OCI-LY7 (cell line): ENCODE measurements at regions of chr2 and their contacts with region 1.

Region 1: GRCh38 chr2:238288650-238289573 is 502 bp upstream of the PER2 start:
- DNase-seq: peak; percentile 100
- H3K4me3 ChIP-seq: peak overlapping the region; percentile 76
- H3K27ac ChIP-seq: peak overlapping the region; percentile 54
- H3K4me1 ChIP-seq: peaks cover 24% of the 10 kb centered on the region
- CTCF ChIP-seq: peak; percentile 41; the same call in 1 of the 2 replicates

Region 2: GRCh38 chr2:238092486-238093035 is 196.4 kb before region 1 on chr2:
- CTCF ChIA-PET with region 1: no interaction called
- POLR2A ChIA-PET with region 1: no interaction called
- intact Hi-C with region 1: no loop called
- DNase-seq: no peak
- H3K4me3 ChIP-seq: no peak overlapping the region
- H3K27ac ChIP-seq: no peak overlapping the region
- H3K4me1 ChIP-seq: peaks cover 1% of the 10 kb centered on the region
- CTCF ChIP-seq: no peak

Region 3: DNA sequence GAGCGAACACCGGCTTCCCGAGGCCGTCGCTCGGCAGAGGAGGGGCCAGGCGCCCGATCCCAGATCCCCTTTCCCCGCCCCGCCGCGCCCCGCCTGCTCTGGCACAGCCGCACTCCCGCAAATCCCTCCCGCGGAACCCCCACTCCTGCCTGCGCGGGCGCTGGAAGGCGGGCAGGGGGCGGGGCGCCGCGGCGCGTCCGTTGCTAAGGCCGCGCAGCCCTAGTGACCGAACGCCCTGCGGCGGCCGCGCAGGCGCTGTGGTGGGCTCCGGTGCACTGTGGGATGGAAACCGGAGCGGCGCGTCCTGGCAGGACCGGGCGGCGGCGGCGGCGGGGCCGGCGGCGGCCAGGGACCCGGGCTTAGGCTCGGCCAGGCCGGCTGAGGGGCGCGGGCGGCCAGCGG is 31.3 kb after region 1 on chr2 and contains the start of gene TRAF3IP1:
- CTCF ChIA-PET with region 1: no interaction called
- POLR2A ChIA-PET with region 1: no interaction called
- intact Hi-C with region 1: loop called (anchors 2 kb)
- DNase-seq: peak; percentile 85
- H3K4me3 ChIP-seq: peak within 1 kb of the TSS; percentile 82
- H3K27ac ChIP-seq: no peak within 1 kb of the TSS
- H3K4me1 ChIP-seq: peaks cover 4% of the 10 kb centered on the region
- CTCF ChIP-seq: no peak
- total RNA-seq, gene TRAF3IP1: 4.3 and 8.2 TPM in 2 replicates

Region 4: DNA sequence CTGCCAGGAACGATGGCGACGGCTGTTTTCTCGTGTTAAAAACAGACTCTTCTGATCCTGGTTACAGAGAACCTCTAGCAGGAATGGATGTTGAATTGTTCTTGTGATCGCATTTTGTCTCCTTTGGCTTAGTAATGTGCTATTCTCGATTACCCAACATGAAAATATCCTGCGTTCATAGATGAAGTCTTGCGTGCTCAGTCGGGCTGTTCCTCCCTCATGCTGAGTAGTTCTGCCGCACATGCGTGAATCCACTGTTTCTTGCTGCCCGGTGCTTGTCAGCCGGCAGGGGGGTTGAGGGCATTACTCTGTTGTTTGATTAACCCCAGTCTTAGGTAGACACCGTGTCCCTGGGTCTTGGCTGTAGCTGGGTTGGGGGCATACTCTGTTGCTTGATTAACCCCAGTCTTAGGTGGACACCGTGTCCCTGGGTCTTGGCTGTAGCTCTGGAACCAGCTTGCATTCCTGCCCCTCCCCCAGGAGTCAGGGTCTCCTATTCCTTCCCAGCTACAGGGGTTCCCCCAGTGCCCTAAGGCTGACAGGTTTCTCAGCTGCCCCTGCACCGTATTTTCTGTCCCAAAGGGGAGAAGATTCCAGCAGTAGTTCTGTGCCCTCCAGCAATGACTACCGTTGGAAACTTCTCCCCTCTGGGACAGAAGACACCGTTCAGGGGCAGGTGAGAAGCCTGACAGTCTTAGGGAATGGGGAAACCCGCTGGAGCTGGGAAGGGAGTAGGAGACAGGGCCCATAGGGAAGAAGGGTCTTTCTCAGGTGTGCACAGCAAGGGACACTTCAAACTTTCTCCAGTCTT is 115.7 kb after region 1 on chr2:
- CTCF ChIA-PET with region 1: no interaction called
- POLR2A ChIA-PET with region 1: no interaction called
- intact Hi-C with region 1: no loop called
- DNase-seq: no peak
- H3K4me3 ChIP-seq: no peak overlapping the region
- H3K27ac ChIP-seq: no peak overlapping the region
- H3K4me1 ChIP-seq: no peaks in the 10 kb centered on the region
- CTCF ChIP-seq: no peak

Region 5: DNA sequence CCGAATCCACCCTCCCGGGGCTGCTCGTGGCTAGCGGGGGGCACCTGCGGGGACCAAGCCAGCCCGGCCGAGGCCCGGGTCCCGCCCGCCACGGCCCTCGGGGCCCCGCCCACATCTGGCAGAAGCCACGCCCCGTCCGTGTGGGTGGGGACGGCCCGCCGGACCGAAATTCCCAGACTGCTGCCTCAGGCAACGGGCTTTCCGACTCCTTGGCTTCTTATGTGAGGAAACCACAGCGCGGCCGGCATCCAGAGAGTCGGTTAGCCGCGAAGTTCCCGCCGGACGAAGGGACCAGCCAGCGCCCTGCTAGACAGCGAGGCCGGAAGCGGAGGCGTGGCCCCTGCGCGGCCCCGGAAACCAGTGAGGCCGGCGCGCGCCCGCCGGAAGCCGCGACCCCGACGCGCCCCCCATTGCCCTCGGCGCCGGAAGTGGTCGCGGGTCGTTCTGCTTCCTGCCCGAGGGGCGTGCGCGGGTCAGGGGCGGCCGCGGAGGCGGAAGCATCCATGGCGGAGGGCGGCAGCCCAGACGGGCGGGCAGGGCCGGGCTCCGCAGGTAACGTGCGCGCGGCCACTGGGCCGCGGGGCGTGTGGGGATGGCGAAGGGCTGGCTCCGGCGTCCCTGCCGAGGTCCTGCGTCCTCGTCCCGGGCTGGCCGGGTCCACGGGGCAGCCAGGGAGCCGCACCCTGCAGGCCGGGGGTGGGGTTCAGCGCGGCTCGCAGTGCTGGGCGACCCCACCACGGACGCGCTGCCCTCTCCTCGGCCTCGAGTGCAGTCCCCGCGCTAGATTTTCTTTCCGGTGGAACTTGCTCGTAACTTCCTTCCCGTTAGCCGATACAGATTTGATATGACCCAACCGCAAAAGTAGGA is 137.9 kb after region 1 on chr2 and contains the start of gene ASB1:
- CTCF ChIA-PET with region 1: no interaction called
- POLR2A ChIA-PET with region 1: no interaction called
- intact Hi-C with region 1: loop called (anchors 2 kb)
- DNase-seq: peak; percentile 93
- H3K4me3 ChIP-seq: peak within 1 kb of the TSS; percentile 94
- H3K27ac ChIP-seq: peak within 1 kb of the TSS; percentile 70
- H3K4me1 ChIP-seq: peaks cover 21% of the 10 kb centered on the region
- CTCF ChIP-seq: no peak
- total RNA-seq, gene ASB1: 18.0 and 19.4 TPM in 2 replicates